ENCODE measurements at regions of chr2 and their contacts with region 1.

Region 1: GRCh38 chr2:176126929-176127773 is 2.4 kb upstream of the HOXD8 start:
- DNase-seq: peak in 33 of 35 experiments; percentile 12 to 86 (median 60)
- ATAC-seq: peak in 1 of 4 experiments; percentile 21
- H3K4me3 ChIP-seq: no peak overlapping the region
- H3K4me3 Mint-ChIP-seq: no peak overlapping the region
- H3K27ac ChIP-seq: no peak overlapping the region
- H3K27ac Mint-ChIP-seq: no peak overlapping the region
- H3K4me1 ChIP-seq: peaks cover 4 to 40% of the 10 kb centered on the region in 2 experiments
- H3K4me1 Mint-ChIP-seq: peaks cover 25 to 35% (median 35%) of the 10 kb centered on the region in 3 donors
- H3K27me3 ChIP-seq: peaks cover 25 to 79% of the 10 kb centered on the region in 2 experiments
- H3K27me3 Mint-ChIP-seq: peaks cover 72 to 76% of the 10 kb centered on the region in 2 donors

Region 2: DNA sequence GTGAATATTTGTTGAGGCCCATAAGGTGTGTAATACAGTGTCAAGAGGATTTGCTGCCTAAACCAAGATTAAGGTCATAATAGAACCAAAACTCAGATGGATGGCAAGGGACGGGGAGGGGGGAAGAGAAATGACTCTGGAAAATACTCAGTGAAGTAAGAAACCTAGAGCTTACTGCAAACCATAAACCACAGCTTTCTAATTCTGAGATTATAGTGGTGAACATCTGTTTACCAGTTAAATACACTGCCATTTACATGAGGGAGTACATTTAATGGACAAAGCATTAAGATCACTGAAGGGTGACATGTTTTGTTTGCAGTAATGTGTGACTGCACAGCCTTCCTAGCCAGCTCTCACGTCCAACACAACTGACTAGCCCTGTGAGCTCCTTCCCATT is 63.2 kb before region 1 on chr2:
- CTCF ChIA-PET with region 1: no interaction called
- POLR2A ChIA-PET with region 1: no interaction called
- DNase-seq: no peak
- ATAC-seq: no peak
- H3K4me3 ChIP-seq: no peak overlapping the region
- H3K4me3 Mint-ChIP-seq: no peak overlapping the region
- H3K27ac ChIP-seq: no peak overlapping the region
- H3K27ac Mint-ChIP-seq: no peak overlapping the region
- H3K4me1 ChIP-seq: peaks cover 0 to 13% of the 10 kb centered on the region in 2 experiments
- H3K4me1 Mint-ChIP-seq: peaks cover 10 to 14% (median 12%) of the 10 kb centered on the region in 3 donors
- H3K27me3 ChIP-seq: peaks cover 30 to 36% of the 10 kb centered on the region in 2 experiments
- H3K27me3 Mint-ChIP-seq: peaks cover 54 to 67% of the 10 kb centered on the region in 2 donors

Region 3: GRCh38 chr2:176181551-176181950 is 54.4 kb after region 1 on chr2:
- CTCF ChIA-PET with region 1: no interaction called
- POLR2A ChIA-PET with region 1: no interaction called
- DNase-seq: no peak
- ATAC-seq: no peak
- H3K4me3 ChIP-seq: no peak overlapping the region
- H3K4me3 Mint-ChIP-seq: no peak overlapping the region
- H3K27ac ChIP-seq: no peak overlapping the region
- H3K27ac Mint-ChIP-seq: no peak overlapping the region
- H3K4me1 ChIP-seq: peaks cover 0 to 9% of the 10 kb centered on the region in 2 experiments
- H3K4me1 Mint-ChIP-seq: peaks cover 0 to 5% (median 3%) of the 10 kb centered on the region in 3 donors
- H3K27me3 ChIP-seq: peaks cover 27 to 38% of the 10 kb centered on the region in 2 experiments
- H3K27me3 Mint-ChIP-seq: peaks cover 78 to 81% of the 10 kb centered on the region in 2 donors

Region 4: DNA sequence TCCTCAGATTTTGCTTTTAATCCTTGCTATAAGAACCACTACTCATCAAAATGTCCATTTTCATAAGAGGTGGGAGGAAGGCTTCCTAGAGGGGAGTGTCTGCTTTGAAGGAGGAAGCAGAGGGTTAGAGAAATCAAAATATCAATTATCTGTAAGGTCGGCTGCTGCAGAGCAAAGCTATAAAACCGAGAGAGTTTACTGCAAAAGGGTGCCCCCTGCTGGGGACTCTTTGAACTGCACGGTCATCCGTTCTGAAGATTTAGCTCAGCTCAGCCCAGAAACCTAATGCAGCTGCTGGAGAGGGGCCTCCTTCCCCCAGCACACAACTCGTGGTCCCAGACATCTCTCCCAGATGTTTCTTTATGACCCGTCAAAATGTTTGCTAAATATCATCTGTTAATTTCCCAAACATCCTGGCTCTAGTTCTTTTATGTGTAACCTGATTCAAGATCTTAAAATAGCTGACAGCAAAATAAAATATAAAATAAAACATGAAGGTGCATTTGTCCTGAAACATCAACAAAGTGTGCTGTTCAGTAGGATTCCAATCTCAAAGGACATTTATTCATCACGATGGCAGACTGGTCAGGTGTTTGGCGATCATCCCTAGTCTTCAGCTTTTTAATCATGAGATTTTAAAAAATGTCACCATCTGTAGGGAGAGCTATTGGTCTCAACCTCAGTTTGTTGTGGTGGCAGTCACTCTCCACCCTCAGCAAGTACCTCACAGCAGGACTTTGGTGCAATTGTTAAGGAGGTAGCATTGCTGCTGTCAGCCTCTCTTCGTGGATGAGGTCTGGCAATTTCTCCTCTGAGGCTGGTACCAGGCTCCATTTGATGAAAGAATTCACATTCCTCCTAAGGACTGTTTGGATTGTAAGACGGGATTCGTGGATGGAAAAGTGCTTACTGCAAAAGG is 328.0 kb after region 1 on chr2:
- CTCF ChIA-PET with region 1: interaction called, 20 to 64 read pairs
- POLR2A ChIA-PET with region 1: interaction called in 1 of 2 experiments, 3 read pairs
- DNase-seq: peak; percentile 17 to 81 (median 69)
- ATAC-seq: peak in 3 of 4 experiments; percentile 51 to 61 (median 54)
- H3K4me3 ChIP-seq: no peak overlapping the region
- H3K4me3 Mint-ChIP-seq: no peak overlapping the region
- H3K27ac ChIP-seq: no peak overlapping the region
- H3K27ac Mint-ChIP-seq: no peak overlapping the region
- H3K4me1 ChIP-seq: no peaks in the 10 kb centered on the region
- H3K4me1 Mint-ChIP-seq: peaks cover 0 to 2% (median 0%) of the 10 kb centered on the region in 3 donors
- H3K27me3 ChIP-seq: peaks cover 0 to 7% of the 10 kb centered on the region in 2 experiments
- H3K27me3 Mint-ChIP-seq: peaks cover 43 to 46% of the 10 kb centered on the region in 2 donors

Region 5: DNA sequence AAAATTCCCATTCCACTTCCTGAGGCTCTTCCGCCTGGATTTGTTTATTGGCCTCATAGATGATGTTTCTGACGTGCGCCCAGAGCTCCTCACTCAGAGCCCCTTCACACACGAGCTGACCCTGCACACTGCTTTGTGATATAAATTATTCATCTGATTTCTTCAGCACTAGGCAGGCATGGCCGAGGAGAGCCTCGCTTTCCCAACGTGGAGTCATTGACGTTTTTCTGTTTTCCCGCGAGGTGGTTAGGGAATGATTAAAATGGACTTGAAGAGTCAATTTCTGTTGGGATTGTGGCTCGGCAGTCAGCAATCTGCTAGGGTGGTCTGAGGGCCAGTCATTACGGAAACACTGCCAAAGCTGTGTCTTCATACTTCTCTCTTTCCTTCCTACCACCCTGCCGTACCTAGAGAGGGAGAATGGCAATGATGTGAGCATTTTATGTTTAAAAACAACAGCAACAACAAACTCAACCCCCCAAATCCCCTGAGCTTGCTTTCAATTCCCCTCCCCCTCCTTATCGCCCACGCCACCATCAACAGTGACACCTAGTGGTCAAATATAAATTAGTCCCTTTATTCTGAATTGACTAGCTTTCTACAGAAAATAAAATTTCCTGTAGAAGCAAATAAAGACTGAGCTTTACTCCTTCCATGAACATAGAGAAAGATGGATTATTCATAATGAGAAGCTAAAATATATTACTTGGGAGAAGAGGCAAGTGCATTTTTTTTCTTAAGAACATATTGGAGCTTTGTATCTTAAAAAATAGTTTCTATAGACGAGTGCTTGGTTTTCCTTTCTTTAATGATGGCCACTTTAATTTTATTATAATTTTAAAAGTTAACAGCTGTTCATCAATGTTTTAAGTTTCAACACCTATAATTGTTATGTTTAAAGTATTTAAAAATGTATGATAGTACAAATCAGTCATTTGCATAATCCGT is 427.2 kb after region 1 on chr2:
- CTCF ChIA-PET with region 1: interaction called, 11 to 21 read pairs
- POLR2A ChIA-PET with region 1: no interaction called
- DNase-seq: peak in 22 of 35 experiments; percentile 2 to 69 (median 9)
- ATAC-seq: peak; percentile 50 to 66 (median 53)
- H3K4me3 ChIP-seq: peak overlapping the region; percentile 51 to 81
- H3K4me3 Mint-ChIP-seq: peak overlapping the region; percentile 76 to 89 (median 76)
- H3K27ac ChIP-seq: no peak overlapping the region
- H3K27ac Mint-ChIP-seq: no peak overlapping the region
- H3K4me1 ChIP-seq: peaks cover 3 to 10% of the 10 kb centered on the region in 2 experiments
- H3K4me1 Mint-ChIP-seq: peaks cover 12 to 15% (median 12%) of the 10 kb centered on the region in 3 donors
- H3K27me3 ChIP-seq: peaks cover 2 to 23% of the 10 kb centered on the region in 2 experiments
- H3K27me3 Mint-ChIP-seq: peaks cover 40 to 45% of the 10 kb centered on the region in 2 donors

Region 6: DNA sequence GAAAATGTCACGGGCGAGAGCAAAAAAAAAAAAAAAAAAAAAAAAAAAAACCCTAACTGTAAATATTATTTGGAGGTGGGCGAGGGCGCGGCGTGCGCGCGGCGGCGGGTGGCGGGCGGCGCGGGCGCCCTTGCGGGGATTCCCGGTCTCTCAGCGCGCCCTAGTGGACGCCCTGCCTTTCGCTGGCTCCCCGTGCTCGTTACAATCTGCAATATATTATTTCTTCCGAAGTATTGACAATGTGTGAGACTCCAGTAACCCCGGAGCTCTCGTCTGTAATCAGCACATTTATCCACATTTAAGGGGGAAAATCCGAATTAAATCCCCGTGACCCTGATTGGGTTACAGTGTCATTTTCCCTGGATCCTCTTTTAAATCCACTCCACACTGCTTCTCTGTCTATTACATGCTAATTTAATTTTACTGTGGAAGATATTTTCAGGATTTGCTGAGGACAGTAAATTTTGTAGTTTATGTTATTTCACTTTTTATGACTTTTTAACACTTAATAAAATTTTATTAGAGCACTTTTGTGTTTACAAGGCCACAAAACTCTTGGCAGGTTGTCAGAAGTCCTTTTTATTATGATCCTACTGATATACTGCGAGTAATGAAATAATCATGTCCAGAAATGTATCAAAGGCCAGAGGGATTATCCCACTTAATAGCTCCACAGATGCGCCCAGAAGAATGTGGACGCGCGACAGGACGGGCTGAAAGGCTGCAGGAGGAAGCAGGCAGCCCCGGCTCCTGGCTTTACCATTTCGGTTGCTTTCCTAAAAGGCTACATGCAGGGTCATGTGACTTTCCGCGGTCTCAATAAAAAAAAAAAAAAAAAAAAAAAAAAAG is 511.2 kb after region 1 on chr2:
- CTCF ChIA-PET with region 1: interaction called in 1 of 2 experiments, 10 read pairs
- POLR2A ChIA-PET with region 1: no interaction called
- DNase-seq: peak in 33 of 35 experiments; percentile 12 to 70 (median 45)
- ATAC-seq: peak; percentile 75 to 90 (median 79)
- H3K4me3 ChIP-seq: peak overlapping the region; percentile 42 to 67
- H3K4me3 Mint-ChIP-seq: peak overlapping the region; percentile 53 to 63 (median 57)
- H3K27ac ChIP-seq: no peak overlapping the region
- H3K27ac Mint-ChIP-seq: no peak overlapping the region
- H3K4me1 ChIP-seq: peaks cover 0 to 9% of the 10 kb centered on the region in 2 experiments
- H3K4me1 Mint-ChIP-seq: peaks cover 0 to 9% (median 9%) of the 10 kb centered on the region in 3 donors
- H3K27me3 ChIP-seq: peaks cover 22 to 37% of the 10 kb centered on the region in 2 experiments
- H3K27me3 Mint-ChIP-seq: peaks cover 56 to 68% of the 10 kb centered on the region in 2 donors

Region 7: GRCh38 chr2:176652300-176653182 is 525.4 kb after region 1 on chr2:
- CTCF ChIA-PET with region 1: interaction called, 9 to 26 read pairs
- POLR2A ChIA-PET with region 1: no interaction called
- DNase-seq: peak in 5 of 35 experiments; percentile 3 to 64 (median 5)
- ATAC-seq: peak in 3 of 4 experiments; percentile 46 to 50 (median 46)
- H3K4me3 ChIP-seq: no peak overlapping the region
- H3K4me3 Mint-ChIP-seq: no peak overlapping the region
- H3K27ac ChIP-seq: no peak overlapping the region
- H3K27ac Mint-ChIP-seq: peak overlapping the region in 1 of 2 donors; percentile 13
- H3K4me1 ChIP-seq: no peaks in the 10 kb centered on the region
- H3K4me1 Mint-ChIP-seq: peaks cover 10 to 14% (median 10%) of the 10 kb centered on the region in 3 donors
- H3K27me3 ChIP-seq: peaks cover 0 to 5% of the 10 kb centered on the region in 2 experiments
- H3K27me3 Mint-ChIP-seq: peaks cover 36 to 54% of the 10 kb centered on the region in 2 donors

Region 8: GRCh38 chr2:176662753-176663152 is 535.6 kb after region 1 on chr2:
- CTCF ChIA-PET with region 1: no interaction called
- POLR2A ChIA-PET with region 1: no interaction called
- DNase-seq: no peak
- ATAC-seq: no peak
- H3K4me3 ChIP-seq: no peak overlapping the region
- H3K4me3 Mint-ChIP-seq: no peak overlapping the region
- H3K27ac ChIP-seq: no peak overlapping the region
- H3K27ac Mint-ChIP-seq: no peak overlapping the region
- H3K4me1 ChIP-seq: no peaks in the 10 kb centered on the region
- H3K4me1 Mint-ChIP-seq: no peaks in the 10 kb centered on the region
- H3K27me3 ChIP-seq: peaks cover 0 to under 1% of the 10 kb centered on the region in 2 experiments
- H3K27me3 Mint-ChIP-seq: peaks cover 41 to 45% of the 10 kb centered on the region in 2 donors

Region 9: DNA sequence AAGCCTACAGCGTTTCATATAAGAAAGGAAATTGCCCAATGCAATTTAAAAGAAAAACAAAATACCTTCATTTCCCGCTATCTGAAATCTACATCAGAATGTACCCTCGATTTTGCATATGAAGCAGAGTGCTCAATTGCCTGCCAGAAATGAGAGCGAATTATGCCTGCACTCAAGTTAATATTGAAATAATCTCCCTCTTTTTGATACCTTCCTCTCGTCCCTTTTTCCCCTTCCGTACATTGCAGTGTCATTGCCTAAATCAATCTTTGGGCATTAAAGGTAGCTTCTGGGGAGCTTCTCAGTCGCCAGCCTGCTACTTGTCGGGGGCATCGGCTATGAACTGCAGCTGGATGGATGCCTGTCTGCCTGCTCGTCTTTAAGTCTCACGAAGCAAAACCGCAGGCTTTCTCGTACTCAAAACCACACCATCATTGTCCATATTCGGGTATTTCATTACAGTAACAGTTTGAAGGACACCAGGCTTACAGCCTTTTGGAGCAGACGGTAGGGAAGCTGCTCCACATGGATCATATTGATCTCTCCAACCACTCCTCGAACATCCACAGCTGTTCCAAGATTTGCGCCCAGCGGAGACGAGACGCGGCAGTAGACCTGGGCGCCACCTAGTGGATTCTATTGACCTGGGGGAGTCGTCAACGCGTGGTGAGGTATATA is 1021.5 kb after region 1 on chr2:
- CTCF ChIA-PET with region 1: interaction called, 18 to 42 read pairs
- POLR2A ChIA-PET with region 1: no interaction called
- DNase-seq: peak; percentile 37 to 85 (median 64)
- ATAC-seq: peak; percentile 89 to 93 (median 91)
- H3K4me3 ChIP-seq: peak overlapping the region; percentile 47 to 57
- H3K4me3 Mint-ChIP-seq: peak overlapping the region; percentile 81 to 91 (median 84)
- H3K27ac ChIP-seq: no peak overlapping the region
- H3K27ac Mint-ChIP-seq: peak overlapping the region in 1 of 2 donors; percentile 63
- H3K4me1 ChIP-seq: peaks cover 8 to 9% of the 10 kb centered on the region in 2 experiments
- H3K4me1 Mint-ChIP-seq: peaks cover 12 to 17% (median 13%) of the 10 kb centered on the region in 3 donors
- H3K27me3 ChIP-seq: peaks cover 4 to 8% of the 10 kb centered on the region in 2 experiments
- H3K27me3 Mint-ChIP-seq: peaks cover 32 to 34% of the 10 kb centered on the region in 2 donors